ENCODE measurements at regions of chr11 and their contacts with region 1.

Region 1: DNA sequence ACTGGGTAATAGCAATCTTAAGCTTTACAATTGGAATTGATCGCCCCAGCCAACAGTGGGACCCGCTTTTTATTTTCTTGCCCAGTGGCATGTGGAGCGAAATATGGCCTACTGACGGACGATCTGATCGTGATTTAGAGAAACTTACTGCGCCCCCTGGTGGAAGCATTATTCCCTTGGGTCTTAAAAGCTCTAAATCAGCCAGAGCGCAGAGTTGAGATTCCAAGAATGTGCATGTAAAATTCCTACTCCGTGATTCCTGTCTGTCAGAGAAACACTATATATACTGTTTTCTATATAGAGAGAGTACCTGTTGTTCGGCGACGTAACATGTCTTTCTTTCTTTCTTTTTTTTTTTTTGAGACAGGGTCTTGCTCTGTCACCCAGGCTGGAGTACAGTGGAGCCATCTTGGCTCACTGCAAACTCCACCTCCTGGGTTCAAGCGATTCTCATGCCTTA is 3.7 kb upstream of the DPF2 start:
- DNase-seq: peak; percentile 71
- CTCF ChIP-seq: peak; percentile 83

Region 2: GRCh38 chr11:65225279-65226102 is 104.5 kb before region 1 on chr11:
- CTCF ChIA-PET with region 1: interaction called, 53 read pairs
- POLR2A ChIA-PET with region 1: no interaction called
- DNase-seq: peak; percentile 84
- CTCF ChIP-seq: peak; percentile 53

Region 3: GRCh38 chr11:65261591-65262380 is 68.2 kb before region 1 on chr11 and contains the start of gene POLA2:
- CTCF ChIA-PET with region 1: interaction called, 41 read pairs
- POLR2A ChIA-PET with region 1: no interaction called
- DNase-seq: peak; percentile 100
- CTCF ChIP-seq: no peak

Region 4: DNA sequence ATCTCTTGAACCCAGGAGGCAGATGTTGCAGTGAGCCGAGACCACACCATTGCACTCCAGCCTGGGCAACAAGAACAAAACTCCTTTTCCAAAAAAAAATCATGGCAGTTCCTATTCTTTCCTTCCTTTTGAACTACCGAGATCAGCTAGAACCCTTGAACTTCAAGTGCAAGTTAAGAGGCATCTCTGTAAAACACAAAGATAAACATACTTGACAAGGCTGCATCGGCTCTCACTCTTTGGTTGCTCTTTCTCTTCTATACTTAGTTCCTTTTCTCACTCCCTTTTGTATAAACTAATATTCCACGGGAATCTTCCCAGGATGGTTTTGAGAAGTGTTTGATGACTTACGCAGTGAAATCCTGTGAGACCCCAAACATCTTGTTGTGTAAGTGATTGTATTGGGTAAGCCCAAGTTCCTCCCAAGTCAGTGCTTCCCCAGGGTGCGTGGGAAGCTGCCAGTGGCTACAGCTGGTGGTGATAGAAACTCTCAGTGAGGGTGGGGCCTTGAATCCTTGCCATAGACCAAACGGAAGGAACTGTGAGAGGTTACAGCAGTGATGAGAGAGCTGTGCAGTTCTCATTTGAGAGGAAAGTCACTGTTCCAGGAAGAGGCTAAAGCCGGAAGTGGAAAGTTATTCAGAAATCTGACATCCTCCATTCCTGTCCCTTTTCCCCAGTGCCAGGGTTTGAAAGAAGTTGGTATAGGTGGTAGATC is 39.4 kb before region 1 on chr11:
- CTCF ChIA-PET with region 1: interaction called, 686 read pairs
- POLR2A ChIA-PET with region 1: interaction called, 3 read pairs
- DNase-seq: no peak
- CTCF ChIP-seq: no peak

Region 5: GRCh38 chr11:65340226-65340625 is 10.3 kb after region 1 on chr11:
- CTCF ChIA-PET with region 1: interaction called, 21 read pairs
- POLR2A ChIA-PET with region 1: interaction called, 5 read pairs
- DNase-seq: no peak
- CTCF ChIP-seq: no peak

Region 6: GRCh38 chr11:65506770-65507505 is 177.0 kb after region 1 on chr11:
- CTCF ChIA-PET with region 1: interaction called, 11 read pairs
- POLR2A ChIA-PET with region 1: interaction called, 15 read pairs
- DNase-seq: no peak
- CTCF ChIP-seq: no peak